Activated T-helper 1 cell treated with anti-CD3 and anti-CD28 coated beads, Interleukin-12 subunit alpha, Interleukin-12 subunit beta, Interleukin-2, Interleukin-4 antibody, amounts not matched to agents 30 ng/mL and 10 ng/mL and 1 ng/mL, durations not matched to agents 14 hours and 24 hours and 36 hours (primary cell): ENCODE measurements at regions of chr2 and their contacts with region 1.

Region 1: GRCh38 chr2:12716282-12717190 is at the start of gene TRIB2:
- DNase-seq: peak; percentile 82
- H3K4me3 Mint-ChIP-seq: peak within 1 kb of the TSS; percentile 91
- H3K27ac Mint-ChIP-seq: peak within 1 kb of the TSS; percentile 91
- H3K4me1 Mint-ChIP-seq: peaks cover 58% of the 10 kb centered on the region
- H3K27me3 Mint-ChIP-seq: peaks cover 10% of the 10 kb centered on the region
- total RNA-seq, gene TRIB2: 6.3 TPM in 2 replicates

Region 2: GRCh38 chr2:11743846-11744553 is 972.5 kb before region 1 on chr2:
- intact Hi-C with region 1: loop called (anchors 2 kb)
- DNase-seq: peak; percentile 67
- H3K4me3 Mint-ChIP-seq: peak overlapping the region; percentile 0
- H3K27ac Mint-ChIP-seq: peak overlapping the region; percentile 79
- H3K4me1 Mint-ChIP-seq: peaks cover 55% of the 10 kb centered on the region
- H3K27me3 Mint-ChIP-seq: peaks cover 3% of the 10 kb centered on the region

Region 3: GRCh38 chr2:12120281-12121150 is 596.0 kb before region 1 on chr2:
- intact Hi-C with region 1: loop called (anchors 10 kb)
- DNase-seq: no peak
- H3K4me3 Mint-ChIP-seq: no peak overlapping the region
- H3K27ac Mint-ChIP-seq: no peak overlapping the region
- H3K4me1 Mint-ChIP-seq: no peaks in the 10 kb centered on the region
- H3K27me3 Mint-ChIP-seq: peaks cover 11% of the 10 kb centered on the region

Region 4: GRCh38 chr2:12416600-12416999 is 299.9 kb before region 1 on chr2:
- intact Hi-C with region 1: loop called (anchors 1 kb)
- DNase-seq: peak; percentile 41
- H3K4me3 Mint-ChIP-seq: no peak overlapping the region
- H3K27ac Mint-ChIP-seq: no peak overlapping the region
- H3K4me1 Mint-ChIP-seq: peaks cover 65% of the 10 kb centered on the region
- H3K27me3 Mint-ChIP-seq: peaks cover 2% of the 10 kb centered on the region

Region 5: DNA sequence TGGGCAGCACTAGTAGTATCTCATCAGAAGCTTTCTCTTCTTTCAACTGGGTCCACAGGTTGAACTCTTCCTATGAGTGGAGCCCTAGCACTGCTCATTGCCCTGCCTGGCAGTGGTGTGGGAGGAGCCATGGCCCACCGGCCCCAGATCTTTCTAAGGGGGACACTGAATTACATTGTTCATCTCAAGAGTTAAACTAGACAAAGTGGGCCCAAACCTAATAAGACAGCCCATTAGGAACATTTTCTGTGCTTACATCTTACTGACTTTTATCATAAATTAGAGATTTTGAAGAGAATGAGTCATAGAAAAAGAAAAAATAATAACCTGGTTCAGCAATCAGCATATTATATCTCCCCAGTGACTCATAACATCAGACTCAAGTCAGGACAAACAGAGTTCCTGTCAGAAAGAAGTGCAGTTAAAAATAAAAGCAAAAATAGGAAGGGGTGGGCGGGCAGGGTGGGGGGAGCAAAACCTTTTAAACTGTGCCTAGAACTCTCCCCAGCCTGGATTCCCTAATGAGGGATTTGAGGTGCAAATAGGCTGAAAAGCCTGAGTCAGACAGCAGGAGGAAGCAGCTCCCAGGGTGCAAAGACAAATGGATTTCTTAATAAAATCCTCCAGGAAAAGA is 161.4 kb before region 1 on chr2:
- intact Hi-C with region 1: loop called (anchors 2 kb)
- DNase-seq: no peak
- H3K4me3 Mint-ChIP-seq: peak overlapping the region; percentile 44
- H3K27ac Mint-ChIP-seq: peak overlapping the region; percentile 88
- H3K4me1 Mint-ChIP-seq: peaks cover 41% of the 10 kb centered on the region
- H3K27me3 Mint-ChIP-seq: no peaks in the 10 kb centered on the region

Region 6: GRCh38 chr2:12587729-12588522 is 128.6 kb before region 1 on chr2:
- intact Hi-C with region 1: no loop called
- DNase-seq: no peak
- H3K4me3 Mint-ChIP-seq: no peak overlapping the region
- H3K27ac Mint-ChIP-seq: no peak overlapping the region
- H3K4me1 Mint-ChIP-seq: peaks cover 8% of the 10 kb centered on the region
- H3K27me3 Mint-ChIP-seq: peaks cover 7% of the 10 kb centered on the region

Region 7: DNA sequence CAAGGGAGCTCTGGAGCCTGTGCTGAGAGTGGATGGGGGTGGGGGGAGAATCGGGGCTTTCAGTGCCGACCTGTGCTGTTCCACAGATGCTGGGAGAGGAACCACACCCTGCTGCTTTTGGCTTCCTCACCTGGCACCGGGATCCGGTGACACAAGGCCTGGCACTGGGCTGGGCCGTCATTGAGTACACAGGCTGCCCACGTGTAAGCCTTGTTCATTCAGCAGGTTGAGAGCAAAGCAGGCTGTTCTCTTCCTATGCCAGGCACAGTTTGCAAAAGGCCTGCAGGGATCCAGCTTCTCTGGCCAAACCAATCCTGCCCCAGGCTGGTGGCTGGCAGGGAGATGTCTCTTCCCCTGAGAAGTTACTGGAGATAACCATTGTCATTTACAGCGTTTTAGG is 17.3 kb after region 1 on chr2:
- intact Hi-C with region 1: no loop called
- DNase-seq: no peak
- H3K4me3 Mint-ChIP-seq: no peak overlapping the region
- H3K27ac Mint-ChIP-seq: no peak overlapping the region
- H3K4me1 Mint-ChIP-seq: peaks cover 24% of the 10 kb centered on the region
- H3K27me3 Mint-ChIP-seq: no peaks in the 10 kb centered on the region

Region 8: DNA sequence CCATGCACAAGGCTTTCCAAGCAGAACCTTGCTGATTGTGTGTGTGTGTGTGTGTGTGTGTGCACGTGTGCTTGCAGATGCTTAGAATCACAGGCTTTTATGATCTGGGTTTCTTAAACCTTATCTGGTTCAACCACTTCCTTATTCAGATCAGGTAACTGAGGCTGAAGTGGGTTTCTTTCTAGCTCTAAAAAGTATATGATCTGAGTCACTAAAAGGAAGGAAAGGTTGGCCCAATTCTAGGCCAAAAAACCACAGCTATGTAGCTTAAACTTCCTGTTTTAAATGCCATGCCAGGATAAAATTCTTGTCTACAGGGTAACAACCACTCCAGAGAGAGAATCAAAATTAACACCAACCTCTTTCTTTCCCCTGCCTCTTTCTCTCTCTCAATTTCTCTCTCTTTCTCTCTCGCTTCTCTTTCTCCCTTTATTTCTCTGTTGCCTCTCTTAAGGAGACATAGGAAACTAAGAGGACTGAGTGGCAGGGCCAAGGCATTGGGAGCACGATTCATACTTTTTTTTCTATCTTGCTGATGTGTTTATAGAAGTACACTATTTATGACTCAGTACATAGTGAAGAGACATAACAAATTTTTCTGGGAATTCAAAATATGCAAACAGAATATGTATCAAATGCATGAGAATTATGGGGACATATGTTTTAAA is 140.5 kb after region 1 on chr2:
- intact Hi-C with region 1: loop called (anchors 2 kb)
- DNase-seq: peak; percentile 26
- H3K4me3 Mint-ChIP-seq: no peak overlapping the region
- H3K27ac Mint-ChIP-seq: no peak overlapping the region
- H3K4me1 Mint-ChIP-seq: peaks cover 18% of the 10 kb centered on the region
- H3K27me3 Mint-ChIP-seq: no peaks in the 10 kb centered on the region